ENCODE measurements at regions of chr7 and their contacts with region 1.

Region 1: DNA sequence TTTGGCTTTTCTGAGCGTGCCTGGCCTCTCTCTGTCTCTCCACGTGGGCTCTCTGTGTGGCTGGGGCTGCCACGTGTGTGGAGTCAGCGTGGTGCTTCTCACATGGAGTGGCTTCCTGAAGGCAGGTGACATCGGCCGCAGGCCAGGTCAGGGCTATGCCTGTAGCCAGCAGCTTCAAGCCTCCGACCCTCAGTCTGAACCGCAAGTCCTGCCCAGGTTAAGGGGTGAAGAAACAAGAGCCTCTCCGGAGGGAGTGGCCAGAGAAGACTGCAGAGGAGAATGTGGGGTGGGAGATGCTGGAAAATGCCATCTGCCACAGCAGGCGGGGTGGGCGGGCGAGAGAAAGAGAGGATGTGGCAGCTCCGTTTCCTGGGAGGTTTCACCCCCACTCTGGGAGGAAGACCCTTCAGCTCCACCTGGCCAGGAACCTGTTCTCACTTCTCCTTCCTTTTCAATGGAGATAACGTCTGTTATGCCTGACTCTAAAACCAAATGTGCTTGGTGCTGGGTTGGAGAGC is 14.3 kb upstream of the VIPR2 start:
- DNase-seq: no peak
- ATAC-seq: no peak
- H3K4me3 ChIP-seq: no peak overlapping the region
- H3K27ac ChIP-seq: no peak overlapping the region
- H3K4me1 ChIP-seq: no peaks in the 10 kb centered on the region
- H3K27me3 ChIP-seq: peaks cover 0 to 5% (median 0%) of the 10 kb centered on the region in 7 donors
- CTCF ChIP-seq: no peak

Region 2: DNA sequence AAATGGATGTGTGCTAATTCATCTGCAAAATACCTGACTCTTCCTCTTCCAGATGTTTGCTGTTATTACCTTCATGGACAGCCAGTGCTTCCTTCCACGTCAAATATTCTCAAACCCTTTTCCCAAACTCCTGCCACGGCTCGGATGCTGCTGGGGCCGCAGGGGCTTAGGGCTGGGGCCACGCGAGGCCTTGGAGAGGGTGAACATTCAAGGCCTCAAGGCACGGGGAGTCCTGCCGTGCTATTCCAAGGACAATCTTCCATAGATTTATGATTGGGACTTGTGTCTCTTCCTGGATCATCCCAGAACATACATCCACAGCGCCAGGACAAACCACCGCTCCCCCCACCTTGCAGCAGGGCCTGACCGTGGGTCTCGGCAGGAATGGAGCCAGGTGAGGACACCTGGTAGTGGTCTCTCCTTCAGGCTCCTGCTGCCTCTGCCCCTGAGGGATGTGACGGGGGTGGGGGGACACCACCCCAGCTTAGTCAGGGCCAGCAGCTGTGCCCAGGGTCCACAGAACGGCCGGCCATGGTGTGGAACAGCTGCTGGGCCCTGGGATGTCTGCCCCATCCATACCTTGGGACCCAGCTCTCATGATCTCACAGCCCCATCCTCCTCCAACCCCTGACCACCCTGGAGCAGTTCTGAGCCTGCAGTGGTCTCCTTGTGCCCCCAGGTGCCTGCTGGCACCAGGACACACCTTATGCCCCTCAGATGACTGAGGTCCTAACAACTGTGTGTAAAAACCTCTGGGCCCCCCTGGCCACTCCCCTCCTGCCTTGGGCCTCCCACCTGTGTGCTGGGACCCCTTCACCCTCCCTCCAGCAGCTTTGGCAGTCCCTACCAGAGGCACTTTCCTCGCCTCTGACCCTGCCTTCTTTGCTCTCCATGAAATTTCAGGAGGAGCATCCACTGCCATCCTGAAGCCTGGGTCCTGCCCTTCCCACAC is 31.0 kb before region 1 on chr7:
- intact Hi-C with region 1: loop called in 1 of 10 experiments (anchors 2 kb)
- DNase-seq: no peak
- ATAC-seq: peak in 2 of 8 donors; percentile 18 to 44
- H3K4me3 ChIP-seq: no peak overlapping the region
- H3K27ac ChIP-seq: no peak overlapping the region
- H3K4me1 ChIP-seq: no peaks in the 10 kb centered on the region
- H3K27me3 ChIP-seq: peaks cover 0 to 7% (median 0%) of the 10 kb centered on the region in 7 donors
- CTCF ChIP-seq: no peak

Region 3: GRCh38 chr7:159218170-159219006 is 59.4 kb after region 1 on chr7:
- intact Hi-C with region 1: no loop called
- DNase-seq: no peak
- ATAC-seq: no peak
- H3K4me3 ChIP-seq: no peak overlapping the region
- H3K27ac ChIP-seq: no peak overlapping the region
- H3K4me1 ChIP-seq: no peaks in the 10 kb centered on the region
- H3K27me3 ChIP-seq: peaks cover 0 to 16% (median 0%) of the 10 kb centered on the region in 7 donors
- CTCF ChIP-seq: no peak

Measured in heart right ventricle (tissue), 16 donors.